Prostate gland (tissue), 2 donors: ENCODE measurements at regions of chr15 and their contacts with region 1.

Region 1: DNA sequence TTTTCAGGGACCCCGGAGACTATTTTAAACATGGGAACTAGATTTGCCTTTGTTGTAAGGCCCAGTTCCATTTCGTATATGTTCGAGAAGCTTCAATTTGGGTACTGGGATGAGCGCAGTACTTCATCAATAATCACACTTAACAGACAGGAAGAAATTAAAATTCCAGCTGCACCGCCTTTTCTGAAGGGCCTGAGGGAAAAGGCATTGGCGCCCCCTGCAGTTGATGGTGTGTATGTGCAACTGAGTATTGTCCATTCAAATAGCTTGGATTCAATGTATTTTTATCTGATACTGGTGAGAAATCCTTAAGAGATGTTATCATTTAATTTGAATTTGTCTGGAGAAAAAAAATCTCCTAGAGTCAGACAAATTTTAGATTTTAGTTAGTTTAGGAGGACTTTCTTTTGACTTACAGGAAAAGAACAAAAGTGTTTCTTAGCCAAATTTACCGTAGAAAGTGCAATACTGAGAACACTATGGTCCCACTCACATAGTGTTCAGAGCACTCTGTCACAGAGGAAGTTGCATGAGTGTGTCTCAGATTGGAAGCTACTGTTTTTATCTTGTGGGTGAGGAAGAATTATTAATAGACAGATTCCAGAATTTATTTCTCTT is 5.4 kb upstream of the ALDH1A2 start:
- DNase-seq: peak; percentile 32
- H3K4me3 ChIP-seq: no peak overlapping the region
- H3K27ac ChIP-seq: no peak overlapping the region
- H3K4me1 ChIP-seq: peaks cover under 1% of the 10 kb centered on the region
- H3K27me3 ChIP-seq: no peaks in the 10 kb centered on the region
- CTCF ChIP-seq: peak; percentile 78 to 91 (median 84)
- POLR2A ChIP-seq: no peak

Region 2: DNA sequence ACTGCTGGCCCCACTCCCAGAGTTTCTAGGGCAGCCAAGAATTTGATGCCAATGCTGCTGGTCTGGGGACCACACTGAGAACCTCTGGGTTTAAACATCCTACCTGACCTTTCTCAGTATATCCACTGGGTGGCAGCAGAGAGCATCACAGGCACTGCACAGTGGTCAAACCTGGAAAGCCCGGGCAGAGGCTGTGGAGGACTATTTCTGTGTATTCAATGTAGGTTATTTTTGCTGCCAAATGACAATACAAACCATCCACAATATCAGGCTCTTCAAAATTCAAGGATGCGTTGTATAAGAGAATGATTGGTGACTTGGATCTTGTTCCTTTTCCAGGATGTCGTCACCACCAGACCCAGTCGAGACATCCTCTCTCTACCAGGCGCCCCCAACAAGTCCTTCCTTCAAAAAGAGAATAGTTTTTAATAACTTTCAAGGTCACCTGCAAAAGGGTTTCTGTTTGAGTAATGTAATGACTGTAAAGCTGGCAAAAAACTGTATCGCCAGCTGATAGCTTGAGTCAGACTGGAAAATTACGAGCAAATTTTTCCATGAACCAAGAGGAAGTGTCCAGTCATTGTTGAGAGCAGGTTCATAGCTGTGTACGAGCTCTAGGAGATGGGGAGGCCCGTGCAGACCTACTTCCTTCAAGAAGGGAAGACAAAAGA is 509.7 kb before region 1 on chr15:
- intact Hi-C with region 1: loop called (anchors 10 kb)
- DNase-seq: peak; percentile 78
- H3K4me3 ChIP-seq: no peak overlapping the region
- H3K27ac ChIP-seq: no peak overlapping the region
- H3K4me1 ChIP-seq: no peaks in the 10 kb centered on the region
- H3K27me3 ChIP-seq: no peaks in the 10 kb centered on the region
- CTCF ChIP-seq: peak; percentile 73 to 94 (median 92)
- POLR2A ChIP-seq: no peak

Region 3: DNA sequence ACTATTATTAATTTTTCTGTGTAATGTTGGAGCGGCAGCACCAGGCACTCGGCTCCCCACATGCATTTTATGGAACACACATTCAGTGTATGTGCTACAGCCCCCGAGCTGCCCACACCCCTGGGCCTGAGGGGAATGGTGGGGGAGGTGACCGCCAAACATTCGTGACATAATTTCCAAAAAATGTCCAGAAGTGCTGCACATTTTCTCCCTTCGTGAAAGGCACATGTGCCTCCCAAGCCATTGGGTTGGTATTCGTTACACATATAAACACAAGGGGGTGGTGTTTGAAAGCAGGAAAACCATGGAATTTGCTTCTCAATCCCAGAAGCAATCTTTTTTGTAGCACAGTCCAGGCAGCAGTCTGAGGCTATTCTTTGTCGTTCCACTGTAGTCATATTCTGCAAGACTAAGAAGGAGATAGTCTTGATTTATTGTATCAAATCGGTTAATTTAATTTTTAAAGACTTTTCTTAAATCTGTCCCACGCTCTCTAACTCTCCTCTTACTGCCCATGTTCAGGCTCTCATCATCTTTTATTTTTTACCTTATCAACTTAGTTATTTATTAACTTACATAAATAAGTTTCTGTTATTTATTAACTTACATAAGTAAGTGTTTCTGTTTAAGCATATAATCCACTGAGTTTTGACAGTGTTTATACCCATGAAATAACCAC is 403.6 kb before region 1 on chr15:
- intact Hi-C with region 1: loop called (anchors 5 kb)
- DNase-seq: peak; percentile 40
- H3K4me3 ChIP-seq: no peak overlapping the region
- H3K27ac ChIP-seq: no peak overlapping the region
- H3K4me1 ChIP-seq: peaks cover 10% of the 10 kb centered on the region
- H3K27me3 ChIP-seq: no peaks in the 10 kb centered on the region
- CTCF ChIP-seq: peak in 3 of 4 experiments; percentile 39 to 59 (median 51)
- POLR2A ChIP-seq: no peak

Region 4: DNA sequence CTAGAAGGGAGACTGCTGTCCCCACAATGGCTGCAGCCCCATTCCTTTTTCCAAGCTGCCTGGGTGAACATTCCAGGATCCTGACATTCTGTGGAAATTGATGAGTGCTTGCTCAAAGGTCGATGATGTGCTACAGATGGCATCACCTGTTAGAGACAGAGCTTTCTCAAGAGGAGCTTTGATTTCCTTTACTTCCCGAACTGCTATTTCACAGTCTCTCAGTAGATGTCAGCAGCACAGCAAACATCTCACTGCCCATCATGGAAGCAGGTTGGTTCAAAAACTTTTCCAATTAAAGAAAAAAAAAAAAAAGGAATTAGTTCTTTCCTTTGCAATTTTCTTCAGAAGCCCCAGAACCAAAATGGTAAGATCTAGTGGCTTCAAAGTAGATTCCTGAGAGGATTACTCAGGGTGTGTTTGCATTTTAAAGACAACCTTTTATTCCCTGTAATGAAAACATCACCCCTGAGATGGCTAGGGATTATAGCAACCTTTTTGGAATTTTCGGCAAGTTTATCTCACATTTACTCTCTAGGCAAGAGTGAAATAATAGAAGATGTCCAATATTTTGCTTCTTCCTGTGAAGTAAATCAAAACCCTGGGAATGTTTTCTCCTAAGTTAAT is 319.6 kb before region 1 on chr15:
- intact Hi-C with region 1: loop called (anchors 2 kb)
- DNase-seq: no peak
- H3K4me3 ChIP-seq: no peak overlapping the region
- H3K27ac ChIP-seq: no peak overlapping the region
- H3K4me1 ChIP-seq: no peaks in the 10 kb centered on the region
- H3K27me3 ChIP-seq: no peaks in the 10 kb centered on the region
- CTCF ChIP-seq: peak in 2 of 4 experiments; percentile 44 to 50
- POLR2A ChIP-seq: no peak

Region 5: DNA sequence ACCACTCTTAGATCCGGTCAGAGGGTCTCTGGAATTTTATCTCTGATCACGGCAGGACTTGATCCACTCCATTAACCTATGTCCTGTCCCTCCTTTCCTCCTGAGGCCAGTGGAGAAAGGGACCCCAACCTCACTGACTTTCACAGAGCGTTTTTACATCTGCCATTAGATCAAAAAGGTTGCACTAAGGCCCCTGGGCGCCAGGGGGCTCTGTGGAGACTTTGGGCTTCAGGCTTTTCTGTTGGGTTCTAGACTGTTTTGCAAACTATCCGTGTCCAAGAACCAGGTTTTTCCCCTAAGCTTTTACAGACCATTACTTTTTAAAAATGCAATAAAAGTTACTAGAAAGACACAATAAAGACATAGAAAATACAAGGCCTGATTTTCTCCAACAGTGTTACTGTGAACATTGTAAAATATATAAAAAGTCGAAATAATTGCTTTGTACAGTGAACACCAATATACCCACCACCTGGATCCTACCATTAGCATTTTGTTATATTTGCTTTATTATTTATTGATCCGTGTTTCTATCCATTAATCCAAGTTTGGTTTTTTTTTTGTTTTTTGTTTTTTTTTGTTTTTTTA is 204.7 kb before region 1 on chr15:
- intact Hi-C with region 1: loop called (anchors 5 kb)
- DNase-seq: peak; percentile 38
- H3K4me3 ChIP-seq: no peak overlapping the region
- H3K27ac ChIP-seq: no peak overlapping the region
- H3K4me1 ChIP-seq: no peaks in the 10 kb centered on the region
- H3K27me3 ChIP-seq: no peaks in the 10 kb centered on the region
- CTCF ChIP-seq: peak in 3 of 4 experiments; percentile 42 to 58 (median 49)
- POLR2A ChIP-seq: no peak

Region 6: DNA sequence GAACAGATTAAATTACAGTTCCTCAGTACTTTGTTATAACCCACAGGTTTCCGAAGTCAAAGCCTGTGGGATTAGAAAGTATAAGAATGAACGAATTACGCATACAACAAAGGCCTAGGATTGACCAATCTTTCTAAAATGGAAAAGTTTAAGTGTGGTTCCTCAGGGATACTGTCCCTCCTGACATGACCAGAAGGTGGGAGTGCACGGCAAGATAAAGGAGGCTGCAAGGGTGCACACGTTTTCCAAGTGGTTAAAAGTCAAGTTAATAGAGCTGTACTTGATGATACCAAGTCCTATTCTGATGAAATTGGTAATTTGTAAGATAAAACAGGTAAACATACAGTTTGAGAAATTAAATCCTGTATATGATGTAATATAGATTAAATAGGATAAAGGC is 101.6 kb before region 1 on chr15:
- intact Hi-C with region 1: loop called (anchors 5 kb)
- DNase-seq: no peak
- H3K4me3 ChIP-seq: no peak overlapping the region
- H3K27ac ChIP-seq: no peak overlapping the region
- H3K4me1 ChIP-seq: no peaks in the 10 kb centered on the region
- H3K27me3 ChIP-seq: no peaks in the 10 kb centered on the region
- CTCF ChIP-seq: peak in 2 of 4 experiments; percentile 19 to 20
- POLR2A ChIP-seq: no peak

Region 7: GRCh38 chr15:58139276-58139988 is 68.5 kb after region 1 on chr15:
- intact Hi-C with region 1: no loop called
- DNase-seq: no peak
- H3K4me3 ChIP-seq: no peak overlapping the region
- H3K27ac ChIP-seq: no peak overlapping the region
- H3K4me1 ChIP-seq: no peaks in the 10 kb centered on the region
- H3K27me3 ChIP-seq: no peaks in the 10 kb centered on the region
- CTCF ChIP-seq: no peak
- POLR2A ChIP-seq: no peak

Region 8: GRCh38 chr15:58182460-58183163 is 111.7 kb after region 1 on chr15:
- intact Hi-C with region 1: no loop called
- DNase-seq: no peak
- H3K4me3 ChIP-seq: no peak overlapping the region
- H3K27ac ChIP-seq: no peak overlapping the region
- H3K4me1 ChIP-seq: no peaks in the 10 kb centered on the region
- H3K27me3 ChIP-seq: no peaks in the 10 kb centered on the region
- CTCF ChIP-seq: peak in 3 of 4 experiments; percentile 55 to 77 (median 70)
- POLR2A ChIP-seq: no peak

Region 9: DNA sequence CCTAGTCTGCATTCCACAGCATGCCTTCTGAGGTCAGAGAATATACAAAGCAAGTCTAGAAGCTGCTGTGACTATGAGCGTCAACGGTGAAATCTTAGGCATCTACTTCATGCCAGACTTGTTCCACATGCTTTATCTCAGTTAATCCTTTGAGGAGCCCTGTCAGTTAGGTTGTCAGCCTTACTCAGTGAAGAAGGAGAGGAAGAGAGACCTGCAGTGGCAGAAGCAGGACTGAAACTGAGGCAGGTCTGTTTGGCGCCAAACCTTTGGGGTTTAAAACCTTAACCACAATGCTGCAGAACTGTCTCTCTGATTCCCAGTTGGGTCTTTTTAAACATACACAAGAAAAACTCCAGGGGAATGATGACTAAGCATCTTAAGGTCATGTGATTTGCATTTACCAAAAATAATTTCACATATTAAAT is 221.9 kb after region 1 on chr15:
- intact Hi-C with region 1: no loop called
- DNase-seq: no peak
- H3K4me3 ChIP-seq: no peak overlapping the region
- H3K27ac ChIP-seq: no peak overlapping the region
- H3K4me1 ChIP-seq: no peaks in the 10 kb centered on the region
- H3K27me3 ChIP-seq: no peaks in the 10 kb centered on the region
- CTCF ChIP-seq: no peak
- POLR2A ChIP-seq: no peak

Region 10: GRCh38 chr15:58369261-58369701 is 298.4 kb after region 1 on chr15:
- intact Hi-C with region 1: no loop called
- DNase-seq: no peak
- H3K4me3 ChIP-seq: no peak overlapping the region
- H3K27ac ChIP-seq: no peak overlapping the region
- H3K4me1 ChIP-seq: no peaks in the 10 kb centered on the region
- H3K27me3 ChIP-seq: no peaks in the 10 kb centered on the region
- CTCF ChIP-seq: no peak
- POLR2A ChIP-seq: no peak